ENCODE measurements at regions of chr11 and their contacts with region 1.

Region 1: DNA sequence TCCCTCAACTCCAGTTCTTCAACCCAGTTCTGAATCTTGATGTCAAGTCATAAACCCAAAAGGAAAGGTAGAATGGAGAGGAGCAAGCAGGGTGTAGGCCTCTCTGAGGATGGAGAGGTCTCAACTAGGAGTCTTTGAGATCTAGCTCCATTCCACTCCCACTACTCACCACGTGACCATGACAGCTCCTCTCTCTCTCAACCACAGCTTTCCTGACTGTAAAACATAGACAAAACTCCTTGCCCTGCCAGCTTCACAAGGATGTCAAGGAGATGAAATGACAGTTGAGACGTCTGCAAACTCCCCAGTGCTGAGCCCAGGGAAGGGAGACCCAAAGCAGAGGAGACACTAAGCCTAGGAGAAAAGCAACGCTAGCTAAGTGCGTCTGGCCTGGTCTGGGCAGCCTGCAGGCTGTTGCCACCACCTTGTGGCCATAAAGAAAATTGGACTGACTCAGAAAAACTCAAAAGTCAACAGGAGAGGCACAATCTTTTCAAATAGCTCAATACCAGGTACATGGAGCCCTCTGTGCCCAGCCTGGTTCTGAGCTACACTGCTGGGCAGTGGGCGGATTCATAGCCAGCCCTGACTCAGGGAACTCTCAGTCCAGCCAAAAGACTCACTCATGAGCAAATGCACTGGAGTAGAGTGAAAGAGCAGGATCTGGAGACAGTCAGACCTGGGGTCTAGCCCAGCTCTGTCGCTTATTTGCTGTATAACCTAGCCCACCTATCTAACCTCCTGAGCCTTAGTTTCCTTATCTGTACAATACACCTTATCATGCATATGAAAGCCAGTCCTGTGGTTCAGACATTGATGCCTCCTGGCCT is 3.4 kb downstream of the CLPB start:
- DNase-seq: peak; percentile 60
- ATAC-seq: peak; percentile 19
- H3K4me3 Mint-ChIP-seq: no peak overlapping the region
- H3K27ac Mint-ChIP-seq: no peak overlapping the region
- H3K4me1 Mint-ChIP-seq: peaks cover 31% of the 10 kb centered on the region
- H3K27me3 Mint-ChIP-seq: no peaks in the 10 kb centered on the region
- CTCF ChIP-seq: peak; percentile 77

Region 2: GRCh38 chr11:72292106-72292785 is 138.7 kb before region 1 on chr11:
- CTCF ChIA-PET with region 1: interaction called, 17 read pairs
- POLR2A ChIA-PET with region 1: no interaction called
- intact Hi-C with region 1: no loop called
- DNase-seq: no peak
- ATAC-seq: no peak
- H3K4me3 Mint-ChIP-seq: no peak overlapping the region
- H3K27ac Mint-ChIP-seq: no peak overlapping the region
- H3K4me1 Mint-ChIP-seq: no peaks in the 10 kb centered on the region
- H3K27me3 Mint-ChIP-seq: no peaks in the 10 kb centered on the region
- CTCF ChIP-seq: no peak

Region 3: GRCh38 chr11:72328366-72329224 is 102.4 kb before region 1 on chr11:
- CTCF ChIA-PET with region 1: interaction called, 11 read pairs
- POLR2A ChIA-PET with region 1: no interaction called
- intact Hi-C with region 1: no loop called
- DNase-seq: no peak
- ATAC-seq: no peak
- H3K4me3 Mint-ChIP-seq: no peak overlapping the region
- H3K27ac Mint-ChIP-seq: no peak overlapping the region
- H3K4me1 Mint-ChIP-seq: peaks cover 25% of the 10 kb centered on the region
- H3K27me3 Mint-ChIP-seq: no peaks in the 10 kb centered on the region
- CTCF ChIP-seq: no peak

Region 4: DNA sequence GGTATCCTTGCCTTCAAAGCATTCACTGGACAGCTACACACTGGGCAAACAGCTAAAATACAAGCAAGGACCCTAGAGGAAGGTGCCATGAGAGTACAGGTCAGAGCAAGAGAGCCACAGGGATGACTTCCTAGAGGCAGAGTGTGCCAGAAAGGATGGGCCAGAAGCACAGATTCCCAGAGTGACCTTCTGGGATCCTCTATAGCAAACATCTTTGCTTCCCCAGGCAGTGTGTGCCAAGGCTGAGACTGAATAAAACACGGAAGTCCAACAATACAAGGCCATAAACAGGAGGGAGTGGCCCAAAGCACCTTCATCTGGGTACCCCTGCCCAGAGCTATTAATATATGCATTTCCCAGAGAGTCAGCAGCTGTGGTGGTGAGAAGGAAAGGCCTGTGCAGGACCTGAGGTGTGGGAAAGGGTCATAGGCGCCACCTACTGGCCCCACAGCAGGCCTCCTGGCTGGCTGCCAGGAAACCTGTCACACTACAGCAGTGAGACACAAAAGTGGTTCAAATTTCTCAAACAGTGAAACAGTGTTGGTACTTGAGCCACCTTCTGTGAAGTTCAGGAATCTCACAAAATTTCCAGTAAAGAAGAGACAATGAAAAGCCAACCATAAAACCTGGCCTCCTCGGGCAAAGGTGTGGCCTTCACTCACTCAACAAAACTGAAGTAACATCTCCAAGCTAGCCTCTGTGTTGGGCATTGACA is 16.9 kb before region 1 on chr11:
- CTCF ChIA-PET with region 1: interaction called, 66 read pairs
- POLR2A ChIA-PET with region 1: interaction called, 3 read pairs
- intact Hi-C with region 1: no loop called
- DNase-seq: peak; percentile 87
- ATAC-seq: peak; percentile 74
- H3K4me3 Mint-ChIP-seq: no peak overlapping the region
- H3K27ac Mint-ChIP-seq: no peak overlapping the region
- H3K4me1 Mint-ChIP-seq: peaks cover 27% of the 10 kb centered on the region
- H3K27me3 Mint-ChIP-seq: no peaks in the 10 kb centered on the region
- CTCF ChIP-seq: peak; percentile 80

Region 5: DNA sequence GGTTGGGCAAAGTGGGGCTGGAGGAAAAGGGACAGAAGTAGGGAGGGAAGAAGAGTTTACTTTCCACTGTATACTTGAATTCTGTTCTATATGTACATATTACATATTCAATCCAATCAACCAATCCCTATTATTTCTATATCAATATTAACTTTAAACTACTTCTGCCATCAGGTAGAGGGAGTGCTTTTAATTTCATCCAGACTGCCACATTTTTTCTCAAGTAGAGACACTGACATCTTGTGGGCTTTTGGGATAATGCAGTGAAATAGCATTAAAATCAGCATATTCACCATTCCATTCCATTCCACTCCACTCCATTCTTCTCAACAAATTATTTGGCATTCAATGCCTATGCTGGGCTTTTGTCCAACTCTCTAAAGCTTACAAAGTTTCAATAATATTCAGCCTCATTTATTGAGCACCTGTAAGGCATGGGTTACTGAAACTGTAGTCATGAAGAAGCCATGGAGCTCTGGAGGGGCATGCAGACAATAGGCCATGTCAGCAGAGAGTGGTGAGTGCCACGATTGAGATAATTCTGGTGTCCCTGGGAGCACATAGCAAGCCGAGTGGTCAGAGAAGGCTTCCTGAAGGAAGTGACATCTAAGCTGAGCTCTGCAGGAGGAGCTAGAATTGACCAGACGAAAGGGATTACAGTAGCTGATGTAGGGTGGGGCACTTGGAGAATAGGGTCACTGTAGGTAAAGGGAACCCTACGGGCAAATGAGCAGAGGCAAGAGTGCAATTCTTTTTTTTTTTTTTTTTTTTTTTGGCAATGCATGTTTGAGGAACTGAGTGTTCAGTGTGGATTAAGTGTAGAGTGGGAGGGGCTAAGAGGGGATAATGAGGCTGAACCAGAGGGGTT is 16.2 kb after region 1 on chr11:
- CTCF ChIA-PET with region 1: interaction called, 17 read pairs
- POLR2A ChIA-PET with region 1: no interaction called
- intact Hi-C with region 1: no loop called
- DNase-seq: no peak
- ATAC-seq: peak; percentile 66
- H3K4me3 Mint-ChIP-seq: no peak overlapping the region
- H3K27ac Mint-ChIP-seq: no peak overlapping the region
- H3K4me1 Mint-ChIP-seq: no peaks in the 10 kb centered on the region
- H3K27me3 Mint-ChIP-seq: peaks cover 4% of the 10 kb centered on the region
- CTCF ChIP-seq: peak; percentile 82

Region 6: GRCh38 chr11:72491001-72491400 is 60.0 kb after region 1 on chr11:
- CTCF ChIA-PET with region 1: no interaction called
- POLR2A ChIA-PET with region 1: no interaction called
- intact Hi-C with region 1: no loop called
- DNase-seq: no peak
- ATAC-seq: no peak
- H3K4me3 Mint-ChIP-seq: no peak overlapping the region
- H3K27ac Mint-ChIP-seq: no peak overlapping the region
- H3K4me1 Mint-ChIP-seq: peaks cover 8% of the 10 kb centered on the region
- H3K27me3 Mint-ChIP-seq: no peaks in the 10 kb centered on the region
- CTCF ChIP-seq: no peak

Measured in activated CD8-positive, alpha-beta T cell treated with anti-CD3 and anti-CD28 coated beads for 36 hours (primary cell).